Dorsolateral prefrontal cortex (tissue), 120 donors: ENCODE measurements at regions of chr6 and their contacts with region 1.

Region 1: GRCh38 chr6:134174672-134175198 is 122.3 kb upstream of the SLC2A12 start:
- DNase-seq: peak; percentile 93 to 98 (median 96)
- H3K4me3 ChIP-seq: peak overlapping the region; percentile 61 to 98 (median 86)
- H3K27ac ChIP-seq: peak overlapping the region; percentile 88 to 100 (median 99)
- H3K27me3 ChIP-seq: no peaks in the 10 kb centered on the region
- CTCF ChIP-seq: peak in 24 of 56 donors; percentile 6 to 45 (median 26)

Region 2: DNA sequence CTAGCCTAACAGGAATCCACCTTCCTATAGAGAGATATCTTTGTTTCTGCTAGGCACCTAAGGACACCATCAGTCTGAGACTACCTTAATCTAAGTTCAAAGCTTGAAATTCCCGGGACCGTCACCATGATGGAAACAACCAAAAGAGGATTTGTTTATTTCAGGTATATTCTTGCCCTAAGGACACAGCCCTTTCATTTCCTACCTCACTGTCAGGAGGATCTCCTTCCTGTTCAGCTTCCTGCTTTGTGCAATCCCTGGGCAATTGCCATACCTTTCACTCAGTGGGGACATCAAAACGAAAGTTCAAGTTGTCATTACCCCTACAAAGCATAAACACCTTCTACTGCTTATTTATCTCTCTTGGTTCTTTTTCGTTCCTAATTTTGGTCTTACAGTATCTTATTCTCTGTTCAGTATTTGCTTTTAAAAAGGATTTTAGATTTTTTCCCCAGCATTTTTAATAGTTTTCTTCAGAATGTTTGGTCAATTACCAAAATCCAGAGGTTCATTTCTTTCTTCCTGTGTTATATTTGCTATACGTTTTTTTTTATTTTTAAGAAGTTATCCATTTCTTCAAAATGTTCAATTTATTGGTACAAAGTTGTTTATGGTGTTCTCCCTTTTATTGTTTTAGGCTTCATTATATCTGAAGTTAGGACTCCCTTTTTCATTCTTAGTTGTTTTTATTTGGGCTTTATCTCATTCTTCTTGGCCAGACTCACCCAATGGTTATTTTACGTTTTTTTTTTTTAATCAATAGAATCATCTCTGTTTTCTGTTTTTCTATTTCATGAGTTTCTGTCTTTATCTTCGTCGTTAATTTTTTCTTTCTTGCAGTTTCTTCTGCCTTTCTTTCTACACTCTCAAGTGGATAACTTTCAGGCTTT is 234.7 kb before region 1 on chr6:
- intact Hi-C with region 1: no loop called
- DNase-seq: no peak
- H3K4me3 ChIP-seq: no peak overlapping the region
- H3K27ac ChIP-seq: no peak overlapping the region
- H3K27me3 ChIP-seq: no peaks in the 10 kb centered on the region
- CTCF ChIP-seq: no peak

Region 3: GRCh38 chr6:134436281-134436815 is 261.6 kb after region 1 on chr6:
- intact Hi-C with region 1: loop called (anchors 2 to 5 kb)
- DNase-seq: peak in 9 of 10 donors; percentile 48 to 88 (median 79)
- H3K4me3 ChIP-seq: peak overlapping the region in 36 of 59 donors; percentile 0 to 50 (median 18)
- H3K27ac ChIP-seq: peak overlapping the region; percentile 22 to 98 (median 89)
- H3K27me3 ChIP-seq: no peaks in the 10 kb centered on the region
- CTCF ChIP-seq: peak in 4 of 56 donors; percentile 9 to 22 (median 18)

Region 4: DNA sequence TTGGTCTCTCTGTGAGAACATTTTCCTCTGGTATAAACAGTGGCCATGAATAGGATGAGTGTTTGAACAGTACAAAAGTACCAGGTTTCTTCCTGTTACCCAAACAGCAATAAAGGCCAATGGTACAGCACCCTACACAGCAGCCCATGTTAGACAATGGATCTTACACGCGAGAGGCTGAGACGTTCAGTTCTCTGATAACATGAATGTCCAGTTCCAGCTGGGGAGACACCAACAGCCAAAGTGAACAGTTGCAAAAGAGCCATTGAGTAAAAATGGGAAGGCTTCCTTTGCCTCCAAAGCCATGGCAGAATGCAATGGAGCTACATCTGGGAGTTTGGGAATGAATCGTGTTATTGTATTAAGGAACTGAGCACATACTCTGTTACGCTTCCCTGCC is 390.0 kb after region 1 on chr6:
- intact Hi-C with region 1: loop called (anchors 2 kb)
- DNase-seq: peak; percentile 15 to 93 (median 75)
- H3K4me3 ChIP-seq: peak overlapping the region in 1 of 59 donors; percentile 30
- H3K27ac ChIP-seq: peak overlapping the region; percentile 49 to 100 (median 97)
- H3K27me3 ChIP-seq: no peaks in the 10 kb centered on the region
- CTCF ChIP-seq: peak in 3 of 56 donors; percentile 10 to 26 (median 19)

Region 5: GRCh38 chr6:134686071-134686470 is 511.3 kb after region 1 on chr6:
- intact Hi-C with region 1: loop called in 1 of 2 experiments (anchors 5 kb)
- DNase-seq: no peak
- H3K4me3 ChIP-seq: no peak overlapping the region
- H3K27ac ChIP-seq: peak overlapping the region in 41 of 59 donors; percentile 5 to 81 (median 53)
- H3K27me3 ChIP-seq: no peaks in the 10 kb centered on the region
- CTCF ChIP-seq: no peak